CD4-positive, alpha-beta memory T cell (primary cell): ENCODE measurements at regions of chr9 and their contacts with region 1.

Region 1: DNA sequence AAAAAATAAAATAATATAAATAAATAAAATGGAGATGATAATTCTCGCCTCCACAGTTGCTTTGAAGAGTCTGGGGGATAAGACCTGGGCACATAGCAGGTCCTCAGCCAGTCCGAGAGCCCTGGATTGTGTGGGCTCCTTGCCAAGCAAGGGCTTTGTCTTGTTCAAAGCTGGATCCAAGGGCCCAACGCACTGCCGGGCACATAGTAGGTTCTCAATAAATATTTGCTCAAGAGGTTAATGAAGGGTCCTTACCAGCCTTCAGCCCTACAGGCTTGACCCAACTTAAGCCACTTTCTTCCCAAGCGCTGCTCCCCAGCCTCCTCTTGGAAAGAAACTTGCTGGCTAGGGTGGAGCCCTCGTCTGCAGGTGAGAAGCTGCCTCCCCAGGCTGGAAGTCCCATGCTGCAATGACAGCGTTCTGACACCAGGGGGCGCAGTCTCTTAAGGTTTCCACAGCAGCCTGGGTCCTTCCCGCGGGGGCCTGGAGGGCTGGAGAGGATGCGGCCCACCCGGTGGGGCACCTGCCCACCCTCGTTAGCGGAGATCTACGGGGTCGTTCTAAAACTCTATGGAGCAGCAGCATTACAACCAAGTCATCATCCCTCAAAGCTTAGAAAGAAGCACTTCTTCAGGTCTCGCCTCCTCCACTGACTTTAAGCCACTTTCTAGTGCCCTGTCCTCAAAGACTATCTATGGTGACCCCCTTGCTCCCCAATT is 115.2 kb downstream of the LHX2 start:
- DNase-seq: peak; percentile 66 to 74 (median 67)
- H3K4me3 ChIP-seq: no peak overlapping the region
- H3K4me3 Mint-ChIP-seq: no peak overlapping the region
- H3K27ac ChIP-seq: no peak overlapping the region
- H3K27ac Mint-ChIP-seq: no peak overlapping the region
- H3K4me1 ChIP-seq: peaks cover 3% of the 10 kb centered on the region
- H3K4me1 Mint-ChIP-seq: peaks cover 0 to 7% (median 3%) of the 10 kb centered on the region in 4 donors
- H3K27me3 ChIP-seq: no peaks in the 10 kb centered on the region
- H3K27me3 Mint-ChIP-seq: peaks cover 0 to 2% of the 10 kb centered on the region in 2 donors

Region 2: DNA sequence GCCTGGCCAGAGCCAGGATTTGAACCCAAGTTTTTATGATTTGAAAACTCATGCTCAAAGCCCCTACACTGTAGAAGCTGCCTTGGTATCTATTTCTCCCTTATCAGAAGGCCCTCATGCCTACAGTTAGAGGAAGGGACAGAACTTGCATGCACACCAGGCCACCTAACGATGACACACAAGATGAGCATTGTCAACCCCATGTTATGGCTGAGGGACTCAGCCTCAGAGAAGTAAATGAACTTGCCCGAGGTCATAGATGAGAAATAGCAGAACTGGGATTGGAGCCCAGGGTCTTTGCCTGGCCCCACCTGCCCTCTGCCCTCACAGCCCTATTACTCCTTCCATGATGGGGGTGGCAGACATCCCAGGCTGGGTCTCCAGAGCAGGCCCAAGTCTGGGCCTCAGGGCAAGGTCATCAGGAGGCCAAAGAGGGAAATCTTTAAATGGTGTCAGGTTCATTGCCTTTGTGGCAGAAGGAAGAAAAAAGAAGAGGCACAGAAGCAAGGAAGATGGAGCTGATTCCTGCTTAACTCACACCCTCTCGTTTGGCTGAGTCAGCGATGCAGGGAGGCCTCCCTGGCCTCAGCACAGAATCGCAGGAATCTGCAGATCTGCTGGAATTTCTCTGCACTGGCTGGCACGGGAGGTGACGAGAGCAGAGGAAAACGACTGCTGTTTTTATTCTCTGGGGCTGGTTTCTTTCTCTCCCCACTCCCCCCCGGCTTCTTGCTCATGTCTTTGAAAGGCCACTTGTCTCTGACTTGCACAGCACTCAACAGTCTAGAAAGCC is 791.3 kb before region 1 on chr9:
- CTCF ChIA-PET with region 1: no interaction called
- POLR2A ChIA-PET with region 1: no interaction called
- intact Hi-C with region 1: no loop called
- DNase-seq: no peak
- H3K4me3 ChIP-seq: no peak overlapping the region
- H3K4me3 Mint-ChIP-seq: no peak overlapping the region
- H3K27ac ChIP-seq: no peak overlapping the region
- H3K27ac Mint-ChIP-seq: no peak overlapping the region
- H3K4me1 ChIP-seq: peaks cover 20% of the 10 kb centered on the region
- H3K4me1 Mint-ChIP-seq: peaks cover 13 to 22% (median 19%) of the 10 kb centered on the region in 4 donors
- H3K27me3 ChIP-seq: no peaks in the 10 kb centered on the region
- H3K27me3 Mint-ChIP-seq: no peaks in the 10 kb centered on the region

Region 3: DNA sequence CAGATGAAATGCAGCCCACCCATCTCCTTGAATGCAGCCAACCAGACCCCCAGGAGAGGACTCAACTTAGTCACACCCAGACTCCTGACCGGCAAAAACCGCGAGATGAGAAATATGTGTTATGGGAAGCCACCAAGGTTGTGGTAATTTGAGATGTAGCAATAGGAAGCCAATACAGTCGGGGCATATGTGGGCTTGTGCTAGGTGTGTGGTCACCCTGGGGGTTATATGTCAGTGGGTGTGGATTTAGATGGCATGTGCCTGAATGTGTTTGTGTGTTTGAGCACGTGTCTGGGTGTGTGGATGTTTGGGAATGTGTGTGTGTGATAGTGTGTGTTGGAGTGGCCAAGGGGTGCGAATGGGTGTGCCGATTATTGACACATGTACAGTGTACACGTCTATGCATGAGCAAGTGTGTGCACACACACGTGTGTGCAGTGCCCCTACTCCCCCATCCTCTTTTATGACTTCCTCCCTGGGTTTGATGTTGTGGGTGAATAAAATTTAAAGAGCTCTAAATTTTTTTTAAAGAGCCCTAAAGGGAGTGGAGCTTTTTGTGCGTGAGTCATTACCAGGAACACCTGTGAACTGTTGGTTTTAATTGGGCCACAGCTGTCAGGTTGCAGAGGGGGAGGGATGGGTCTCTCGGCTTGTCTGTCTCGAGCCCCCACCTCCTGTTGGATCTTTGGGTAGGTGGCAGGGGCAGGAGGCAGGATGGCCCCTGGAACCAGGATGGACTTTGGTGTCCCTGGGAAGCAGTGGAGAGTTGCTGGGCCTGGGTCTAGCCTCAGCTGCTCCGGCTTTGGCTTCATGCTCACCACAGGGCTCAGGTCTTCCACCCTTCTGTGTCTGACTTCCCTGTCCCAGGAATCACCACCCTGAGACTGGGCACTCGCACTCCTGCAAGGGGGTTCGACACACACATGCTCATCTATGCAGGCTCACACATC is 28.3 kb before region 1 on chr9:
- CTCF ChIA-PET with region 1: no interaction called
- POLR2A ChIA-PET with region 1: no interaction called
- intact Hi-C with region 1: no loop called
- DNase-seq: no peak
- H3K4me3 ChIP-seq: no peak overlapping the region
- H3K4me3 Mint-ChIP-seq: no peak overlapping the region
- H3K27ac ChIP-seq: no peak overlapping the region
- H3K27ac Mint-ChIP-seq: no peak overlapping the region
- H3K4me1 ChIP-seq: no peaks in the 10 kb centered on the region
- H3K4me1 Mint-ChIP-seq: peaks cover 0 to under 1% (median 0%) of the 10 kb centered on the region in 4 donors
- H3K27me3 ChIP-seq: no peaks in the 10 kb centered on the region
- H3K27me3 Mint-ChIP-seq: peaks cover 7 to 31% of the 10 kb centered on the region in 2 donors

Region 4: GRCh38 chr9:124110307-124110915 is 16.3 kb before region 1 on chr9:
- CTCF ChIA-PET with region 1: interaction called, 10 read pairs
- POLR2A ChIA-PET with region 1: no interaction called
- intact Hi-C with region 1: no loop called
- DNase-seq: peak; percentile 33 to 43 (median 35)
- H3K4me3 ChIP-seq: no peak overlapping the region
- H3K4me3 Mint-ChIP-seq: no peak overlapping the region
- H3K27ac ChIP-seq: no peak overlapping the region
- H3K27ac Mint-ChIP-seq: no peak overlapping the region
- H3K4me1 ChIP-seq: no peaks in the 10 kb centered on the region
- H3K4me1 Mint-ChIP-seq: no peaks in the 10 kb centered on the region
- H3K27me3 ChIP-seq: no peaks in the 10 kb centered on the region
- H3K27me3 Mint-ChIP-seq: peaks cover 9 to 22% of the 10 kb centered on the region in 2 donors

Region 5: GRCh38 chr9:124164811-124165210 is 38.1 kb after region 1 on chr9:
- CTCF ChIA-PET with region 1: no interaction called
- POLR2A ChIA-PET with region 1: no interaction called
- intact Hi-C with region 1: no loop called
- DNase-seq: no peak
- H3K4me3 ChIP-seq: no peak overlapping the region
- H3K4me3 Mint-ChIP-seq: peak overlapping the region in 1 of 8 donors; percentile 52
- H3K27ac ChIP-seq: no peak overlapping the region
- H3K27ac Mint-ChIP-seq: no peak overlapping the region
- H3K4me1 ChIP-seq: no peaks in the 10 kb centered on the region
- H3K4me1 Mint-ChIP-seq: no peaks in the 10 kb centered on the region
- H3K27me3 ChIP-seq: no peaks in the 10 kb centered on the region
- H3K27me3 Mint-ChIP-seq: peaks cover 2 to 4% of the 10 kb centered on the region in 2 donors

Region 6: GRCh38 chr9:124257844-124258606 is 131.3 kb after region 1 on chr9 and contains the start of gene NEK6:
- CTCF ChIA-PET with region 1: interaction called, 7 read pairs
- POLR2A ChIA-PET with region 1: interaction called, 3 read pairs
- intact Hi-C with region 1: loop called (anchors 10 kb)
- DNase-seq: peak; percentile 41 to 55 (median 52)
- H3K4me3 ChIP-seq: peak within 1 kb of the TSS; percentile 65
- H3K4me3 Mint-ChIP-seq: peak within 1 kb of the TSS; percentile 94 to 97 (median 96)
- H3K27ac ChIP-seq: peak within 1 kb of the TSS; percentile 15
- H3K27ac Mint-ChIP-seq: peak within 1 kb of the TSS; percentile 83 to 96 (median 91)
- H3K4me1 ChIP-seq: peaks cover 32% of the 10 kb centered on the region
- H3K4me1 Mint-ChIP-seq: peaks cover 33 to 68% (median 51%) of the 10 kb centered on the region in 4 donors
- H3K27me3 ChIP-seq: no peaks in the 10 kb centered on the region
- H3K27me3 Mint-ChIP-seq: no peaks in the 10 kb centered on the region
- total RNA-seq, gene NEK6: 9.9 to 11.7 TPM

Region 7: GRCh38 chr9:124320062-124320973 is 193.6 kb after region 1 on chr9:
- CTCF ChIA-PET with region 1: interaction called, 11 read pairs
- POLR2A ChIA-PET with region 1: no interaction called
- intact Hi-C with region 1: no loop called
- DNase-seq: peak in 4 of 5 donors; percentile 19 to 31 (median 22)
- H3K4me3 ChIP-seq: no peak overlapping the region
- H3K4me3 Mint-ChIP-seq: no peak overlapping the region
- H3K27ac ChIP-seq: no peak overlapping the region
- H3K27ac Mint-ChIP-seq: peak overlapping the region in 3 of 7 donors; percentile 29 to 47 (median 37)
- H3K4me1 ChIP-seq: peaks cover 6% of the 10 kb centered on the region
- H3K4me1 Mint-ChIP-seq: peaks cover 3 to 12% (median 6%) of the 10 kb centered on the region in 4 donors
- H3K27me3 ChIP-seq: no peaks in the 10 kb centered on the region
- H3K27me3 Mint-ChIP-seq: no peaks in the 10 kb centered on the region

Region 8: DNA sequence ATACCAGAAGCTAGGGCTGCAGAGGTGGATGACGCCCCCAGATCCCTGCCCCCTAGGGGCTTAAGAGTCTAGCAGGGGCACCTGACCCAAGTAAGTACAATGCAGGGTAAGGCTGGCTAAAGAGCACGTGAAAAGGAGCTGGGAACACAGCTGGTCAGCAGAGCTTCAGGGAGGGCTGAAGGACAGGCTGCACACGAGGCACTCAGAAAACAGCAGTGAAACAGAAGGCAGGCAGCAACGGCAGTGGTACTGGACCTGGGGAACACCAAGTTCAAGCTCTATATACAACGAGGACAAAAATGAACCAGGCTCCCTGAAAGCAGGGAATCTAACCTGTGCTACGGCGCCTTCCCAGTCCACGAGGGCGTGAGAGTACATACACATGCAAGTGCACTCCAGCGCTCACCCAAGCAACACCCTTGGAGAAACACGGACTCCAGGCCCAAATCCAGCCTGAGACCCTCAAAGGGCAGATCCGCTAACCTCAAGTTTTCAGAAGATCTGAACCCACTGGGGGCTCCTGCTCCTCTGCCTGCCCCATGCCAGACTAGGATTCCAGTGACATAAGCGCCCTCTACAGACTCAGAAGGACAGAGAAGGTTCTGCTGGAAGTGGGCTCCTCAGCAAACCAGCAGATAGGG is 231.1 kb after region 1 on chr9:
- CTCF ChIA-PET with region 1: interaction called, 3 read pairs
- POLR2A ChIA-PET with region 1: no interaction called
- intact Hi-C with region 1: loop called (anchors 1 kb)
- DNase-seq: no peak
- H3K4me3 ChIP-seq: no peak overlapping the region
- H3K4me3 Mint-ChIP-seq: no peak overlapping the region
- H3K27ac ChIP-seq: no peak overlapping the region
- H3K27ac Mint-ChIP-seq: peak overlapping the region in 6 of 7 donors; percentile 30 to 85 (median 68)
- H3K4me1 ChIP-seq: peaks cover 30% of the 10 kb centered on the region
- H3K4me1 Mint-ChIP-seq: peaks cover 34 to 51% (median 43%) of the 10 kb centered on the region in 4 donors
- H3K27me3 ChIP-seq: no peaks in the 10 kb centered on the region
- H3K27me3 Mint-ChIP-seq: no peaks in the 10 kb centered on the region

Region 9: GRCh38 chr9:124394596-124394995 is 267.9 kb after region 1 on chr9:
- CTCF ChIA-PET with region 1: interaction called, 15 read pairs
- POLR2A ChIA-PET with region 1: no interaction called
- intact Hi-C with region 1: loop called (anchors 2 kb)
- DNase-seq: no peak
- H3K4me3 ChIP-seq: no peak overlapping the region
- H3K4me3 Mint-ChIP-seq: no peak overlapping the region
- H3K27ac ChIP-seq: no peak overlapping the region
- H3K27ac Mint-ChIP-seq: peak overlapping the region in 1 of 7 donors; percentile 9
- H3K4me1 ChIP-seq: peaks cover 11% of the 10 kb centered on the region
- H3K4me1 Mint-ChIP-seq: peaks cover 31 to 56% (median 42%) of the 10 kb centered on the region in 4 donors
- H3K27me3 ChIP-seq: no peaks in the 10 kb centered on the region
- H3K27me3 Mint-ChIP-seq: no peaks in the 10 kb centered on the region

Region 10: GRCh38 chr9:124537926-124538325 is 411.2 kb after region 1 on chr9:
- CTCF ChIA-PET with region 1: interaction called, 16 read pairs
- POLR2A ChIA-PET with region 1: no interaction called
- intact Hi-C with region 1: no loop called
- DNase-seq: no peak
- H3K4me3 ChIP-seq: no peak overlapping the region
- H3K4me3 Mint-ChIP-seq: no peak overlapping the region
- H3K27ac ChIP-seq: no peak overlapping the region
- H3K27ac Mint-ChIP-seq: peak overlapping the region in 1 of 7 donors; percentile 40
- H3K4me1 ChIP-seq: no peaks in the 10 kb centered on the region
- H3K4me1 Mint-ChIP-seq: peaks cover 0 to 2% (median 0%) of the 10 kb centered on the region in 4 donors
- H3K27me3 ChIP-seq: no peaks in the 10 kb centered on the region
- H3K27me3 Mint-ChIP-seq: peaks cover 9 to 10% of the 10 kb centered on the region in 2 donors